Activated T-helper 1 cell treated with anti-CD3 and anti-CD28 coated beads, Interleukin-12 subunit alpha, Interleukin-12 subunit beta, Interleukin-2, Interleukin-4 antibody, amounts not matched to agents 30 ng/mL and 10 ng/mL and 1 ng/mL, durations not matched to agents 14 hours and 24 hours and 36 hours (primary cell): ENCODE measurements at regions of chr10 and their contacts with region 1.

Region 1: DNA sequence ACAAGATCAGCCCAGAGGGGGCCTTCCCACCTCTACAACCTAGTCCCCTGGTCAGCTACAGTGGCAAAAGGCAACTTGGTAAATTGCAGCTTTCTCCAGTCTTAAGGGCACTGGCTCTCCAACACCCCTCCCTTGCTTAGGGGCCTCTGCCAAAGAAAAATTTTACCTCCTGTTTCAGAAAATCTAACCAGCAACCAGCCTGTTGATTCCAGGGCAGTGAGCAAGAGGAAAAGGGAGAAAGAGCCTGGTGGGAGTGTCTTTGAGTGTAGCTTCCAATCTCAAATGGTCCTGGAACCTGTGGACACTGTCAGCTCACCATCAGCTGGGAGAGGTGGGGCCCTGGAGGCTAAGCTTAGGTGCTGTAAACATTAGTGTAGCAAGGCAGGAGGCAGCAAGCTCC is 22.9 kb downstream of the ACTR1A start:
- DNase-seq: no peak
- H3K4me3 Mint-ChIP-seq: no peak overlapping the region
- H3K27ac Mint-ChIP-seq: no peak overlapping the region
- H3K4me1 Mint-ChIP-seq: peaks cover 7% of the 10 kb centered on the region
- H3K27me3 Mint-ChIP-seq: no peaks in the 10 kb centered on the region

Region 2: GRCh38 chr10:101639141-101639900 is 840.3 kb before region 1 on chr10:
- intact Hi-C with region 1: no loop called
- DNase-seq: no peak
- H3K4me3 Mint-ChIP-seq: no peak overlapping the region
- H3K27ac Mint-ChIP-seq: no peak overlapping the region
- H3K4me1 Mint-ChIP-seq: peaks cover 5% of the 10 kb centered on the region
- H3K27me3 Mint-ChIP-seq: no peaks in the 10 kb centered on the region

Region 3: GRCh38 chr10:102231357-102232318 is 248.0 kb before region 1 on chr10:
- intact Hi-C with region 1: loop called (anchors 1 kb)
- DNase-seq: peak; percentile 65
- H3K4me3 Mint-ChIP-seq: peak overlapping the region; percentile 68
- H3K27ac Mint-ChIP-seq: no peak overlapping the region
- H3K4me1 Mint-ChIP-seq: peaks cover 10% of the 10 kb centered on the region
- H3K27me3 Mint-ChIP-seq: peaks cover 58% of the 10 kb centered on the region

Region 4: GRCh38 chr10:102432162-102432950 is 47.3 kb before region 1 on chr10 and contains the start of gene CUEDC2:
- intact Hi-C with region 1: loop called (anchors 1 kb)
- DNase-seq: peak; percentile 95
- H3K4me3 Mint-ChIP-seq: peak within 1 kb of the TSS; percentile 95
- H3K27ac Mint-ChIP-seq: peak within 1 kb of the TSS; percentile 94
- H3K4me1 Mint-ChIP-seq: peaks cover 55% of the 10 kb centered on the region
- H3K27me3 Mint-ChIP-seq: no peaks in the 10 kb centered on the region
- total RNA-seq, gene CUEDC2: 59.0 and 59.4 TPM in 2 replicates

Region 5: DNA sequence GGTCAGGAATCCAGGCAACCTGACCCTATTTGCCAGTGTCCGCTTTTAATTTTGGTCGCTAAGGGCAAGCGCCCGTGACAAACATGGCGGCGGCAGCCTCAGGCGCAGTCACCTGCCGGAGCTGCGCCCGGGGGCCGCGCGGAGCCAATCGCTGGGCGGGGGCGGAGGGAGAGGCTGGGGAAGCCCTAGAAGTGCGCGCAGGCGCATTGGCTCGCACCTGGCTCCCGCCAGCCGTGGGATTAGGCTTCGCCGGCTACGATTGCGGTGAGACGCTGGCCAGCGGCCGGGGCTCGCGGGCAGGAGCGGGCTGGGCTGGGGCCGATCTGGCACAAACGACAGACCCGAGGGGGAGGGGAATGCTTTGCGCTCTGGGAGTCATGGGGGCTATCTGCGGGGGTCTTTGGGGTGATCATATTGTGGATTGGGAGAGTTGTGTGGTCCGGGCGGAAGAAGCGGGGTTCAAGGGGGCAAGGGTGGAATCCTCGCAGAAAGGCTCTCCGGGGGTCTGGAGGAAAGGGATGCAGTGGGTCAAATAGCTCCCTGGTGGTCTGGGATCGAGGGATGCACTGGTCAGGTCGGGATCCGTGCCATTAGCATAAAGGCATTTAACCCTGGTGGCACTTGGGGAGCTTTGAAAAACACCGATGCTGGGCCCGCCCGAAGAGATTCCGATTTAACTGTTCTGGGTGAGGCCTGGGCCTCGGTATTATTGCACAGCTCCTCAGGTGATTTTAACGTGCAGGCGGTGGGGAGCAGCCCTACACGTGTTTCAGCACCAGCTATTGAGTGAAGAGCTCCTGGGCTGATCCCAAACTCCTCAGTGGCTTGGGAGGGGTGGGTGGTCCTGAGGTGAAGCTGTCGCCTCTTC is 18.2 kb before region 1 on chr10:
- intact Hi-C with region 1: loop called (anchors 1 kb)
- DNase-seq: peak; percentile 91
- H3K4me3 Mint-ChIP-seq: peak overlapping the region; percentile 94
- H3K27ac Mint-ChIP-seq: peak overlapping the region; percentile 87
- H3K4me1 Mint-ChIP-seq: peaks cover 26% of the 10 kb centered on the region
- H3K27me3 Mint-ChIP-seq: peaks cover 1% of the 10 kb centered on the region

Region 6: DNA sequence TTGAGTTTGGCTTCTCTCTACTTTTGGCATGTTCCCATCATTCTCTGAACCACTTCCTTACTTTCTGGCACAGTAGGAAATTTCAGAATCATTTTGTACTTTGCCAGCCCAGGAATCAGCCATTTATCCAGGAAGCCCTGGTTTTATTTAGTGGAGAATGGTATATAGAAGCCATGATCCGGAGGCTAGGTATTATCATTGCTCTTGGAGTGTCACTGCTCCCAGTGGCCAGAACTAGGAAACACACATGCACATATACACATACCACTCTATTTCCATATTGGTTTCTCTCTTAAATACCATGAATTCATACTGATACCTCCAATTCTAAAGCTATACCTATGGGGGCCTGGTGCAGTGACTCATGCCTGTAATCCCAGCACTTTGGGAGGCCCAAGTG is 60.4 kb after region 1 on chr10:
- intact Hi-C with region 1: no loop called
- DNase-seq: no peak
- H3K4me3 Mint-ChIP-seq: no peak overlapping the region
- H3K27ac Mint-ChIP-seq: no peak overlapping the region
- H3K4me1 Mint-ChIP-seq: peaks cover 7% of the 10 kb centered on the region
- H3K27me3 Mint-ChIP-seq: no peaks in the 10 kb centered on the region